IMR-90 (cell line): ENCODE measurements at regions of chr5 and their contacts with region 1.

Region 1: GRCh38 chr5:160399402-160400353 is at the start of gene FAM200C:
- DNase-seq: peak; percentile 94
- ATAC-seq: peak; percentile 93
- H3K4me3 ChIP-seq: peak within 1 kb of the TSS; percentile 79
- H3K27ac ChIP-seq: peak within 1 kb of the TSS; percentile 94
- H3K4me1 ChIP-seq: no peaks in the 10 kb centered on the region; the same call in 1 of the 2 replicates
- H3K27me3 ChIP-seq: no peaks in the 10 kb centered on the region
- CTCF ChIP-seq: no peak
- POLR2A ChIP-seq: peak; percentile 91
- RAD21 ChIP-seq: no peak
- total RNA-seq, gene FAM200C: 6.3 and 6.7 TPM in 2 replicates

Region 2: DNA sequence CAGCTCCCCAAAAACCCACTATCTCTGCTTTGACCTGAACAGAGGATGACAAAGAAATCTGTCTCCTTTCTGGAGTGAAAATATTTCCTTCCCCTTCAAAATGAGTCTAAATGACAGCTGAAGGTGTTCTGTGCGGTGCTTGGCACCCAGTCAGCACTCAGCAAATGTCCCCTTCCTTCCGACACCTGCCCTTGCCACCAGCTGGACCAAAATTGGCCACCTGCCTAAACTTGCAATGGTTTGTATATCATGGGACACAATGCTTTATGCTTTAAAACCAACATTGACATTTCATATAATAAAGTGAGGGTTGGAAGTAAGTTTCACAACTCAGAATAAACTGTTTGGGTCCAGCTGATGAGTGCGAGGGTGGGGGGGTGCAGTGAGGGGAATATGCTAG is 398.2 kb before region 1 on chr5:
- CTCF ChIA-PET with region 1: no interaction called
- POLR2A ChIA-PET with region 1: interaction called, 10 read pairs
- dilution Hi-C with region 1: no loop called
- in situ Hi-C with region 1: no loop called
- intact Hi-C with region 1: no loop called
- DNase-seq: no peak
- ATAC-seq: no peak
- H3K4me3 ChIP-seq: no peak overlapping the region
- H3K27ac ChIP-seq: no peak overlapping the region
- H3K4me1 ChIP-seq: peaks cover 5% of the 10 kb centered on the region; the same call in 1 of the 2 replicates
- H3K27me3 ChIP-seq: no peaks in the 10 kb centered on the region
- CTCF ChIP-seq: no peak
- POLR2A ChIP-seq: no peak
- RAD21 ChIP-seq: no peak

Region 3: GRCh38 chr5:160082614-160083500 is 316.8 kb before region 1 on chr5:
- CTCF ChIA-PET with region 1: no interaction called
- POLR2A ChIA-PET with region 1: no interaction called
- dilution Hi-C with region 1: no loop called
- in situ Hi-C with region 1: no loop called
- intact Hi-C with region 1: loop called (anchors 10 kb)
- DNase-seq: peak; percentile 81
- ATAC-seq: peak; percentile 83
- H3K4me3 ChIP-seq: no peak overlapping the region; the same call in 1 of the 2 replicates
- H3K27ac ChIP-seq: peak overlapping the region; percentile 89
- H3K4me1 ChIP-seq: peaks cover 12% of the 10 kb centered on the region
- H3K27me3 ChIP-seq: no peaks in the 10 kb centered on the region
- CTCF ChIP-seq: no peak
- POLR2A ChIP-seq: no peak
- RAD21 ChIP-seq: no peak

Region 4: GRCh38 chr5:160199410-160199911 is 200.2 kb before region 1 on chr5:
- CTCF ChIA-PET with region 1: no interaction called
- POLR2A ChIA-PET with region 1: interaction called, 23 read pairs
- dilution Hi-C with region 1: no loop called
- in situ Hi-C with region 1: no loop called
- intact Hi-C with region 1: no loop called
- DNase-seq: peak; percentile 23
- ATAC-seq: peak; percentile 98
- H3K4me3 ChIP-seq: no peak overlapping the region
- H3K27ac ChIP-seq: peak overlapping the region; percentile 30; the same call in 1 of the 2 replicates
- H3K4me1 ChIP-seq: peaks cover 12% of the 10 kb centered on the region
- H3K27me3 ChIP-seq: no peaks in the 10 kb centered on the region
- CTCF ChIP-seq: peak; percentile 84
- POLR2A ChIP-seq: 0 out of 2 replicates have a peak, but pooled peaks have one; percentile 20
- RAD21 ChIP-seq: peak; percentile 85

Region 5: DNA sequence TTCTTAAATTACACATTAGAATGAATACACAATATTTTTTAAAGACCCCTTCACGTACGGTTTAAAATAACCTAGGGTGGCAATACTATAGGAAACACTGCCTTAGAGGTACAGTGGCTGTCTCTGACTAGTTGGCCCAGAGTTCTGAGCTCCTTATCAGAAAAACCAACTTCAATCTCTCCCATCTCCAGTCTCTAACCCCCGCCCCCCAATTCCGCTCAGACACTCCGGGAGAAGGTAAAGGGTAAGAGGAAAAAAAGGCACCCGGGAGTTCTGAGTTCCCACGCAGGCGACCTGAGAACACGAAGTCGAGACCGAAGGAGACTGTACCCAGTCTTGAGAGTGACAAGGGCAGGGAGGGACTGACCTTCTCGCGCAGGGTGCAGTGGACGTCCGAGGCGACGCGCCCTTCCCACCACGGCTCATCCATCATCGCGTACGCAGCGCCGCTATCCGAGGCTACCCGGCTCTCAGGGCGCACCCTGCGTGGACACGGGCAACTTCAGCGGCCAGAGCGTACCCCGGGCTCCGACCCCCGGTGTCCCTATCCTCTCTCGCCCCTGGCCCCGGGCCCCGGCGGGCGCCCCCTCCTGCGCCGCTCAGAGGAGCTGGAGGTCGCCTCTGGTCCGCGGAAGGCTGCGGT is 88.1 kb before region 1 on chr5:
- CTCF ChIA-PET with region 1: no interaction called
- POLR2A ChIA-PET with region 1: no interaction called
- dilution Hi-C with region 1: no loop called
- in situ Hi-C with region 1: no loop called
- intact Hi-C with region 1: no loop called
- DNase-seq: no peak
- ATAC-seq: peak; percentile 59
- H3K4me3 ChIP-seq: peak overlapping the region; percentile 91
- H3K27ac ChIP-seq: no peak overlapping the region; the same call in 1 of the 2 replicates
- H3K4me1 ChIP-seq: peaks cover 2% of the 10 kb centered on the region; the same call in 1 of the 2 replicates
- H3K27me3 ChIP-seq: no peaks in the 10 kb centered on the region; the same call in 1 of the 2 replicates
- CTCF ChIP-seq: no peak
- POLR2A ChIP-seq: no peak
- RAD21 ChIP-seq: no peak

Region 6: GRCh38 chr5:160333721-160334120 is 66.0 kb before region 1 on chr5:
- CTCF ChIA-PET with region 1: no interaction called
- POLR2A ChIA-PET with region 1: no interaction called
- dilution Hi-C with region 1: no loop called
- in situ Hi-C with region 1: no loop called
- intact Hi-C with region 1: no loop called
- DNase-seq: peak; percentile 63
- ATAC-seq: peak; percentile 49
- H3K4me3 ChIP-seq: no peak overlapping the region
- H3K27ac ChIP-seq: no peak overlapping the region
- H3K4me1 ChIP-seq: peaks cover 5% of the 10 kb centered on the region
- H3K27me3 ChIP-seq: peaks cover 8% of the 10 kb centered on the region
- CTCF ChIP-seq: no peak
- POLR2A ChIP-seq: no peak
- RAD21 ChIP-seq: no peak